Activated naive CD4-positive, alpha-beta T cell treated with anti-CD3 and anti-CD28 coated beads for 36 hours (primary cell): ENCODE measurements at regions of chr16 and their contacts with region 1.

Region 1: GRCh38 chr16:67017810-67018488 is 11.0 kb upstream of the CBFB start:
- DNase-seq: peak; percentile 96
- H3K4me3 Mint-ChIP-seq: no peak overlapping the region
- H3K27ac Mint-ChIP-seq: no peak overlapping the region
- H3K4me1 Mint-ChIP-seq: peaks cover 5% of the 10 kb centered on the region
- H3K27me3 Mint-ChIP-seq: peaks cover 4% of the 10 kb centered on the region

Region 2: GRCh38 chr16:66947302-66948065 is 70.5 kb before region 1 on chr16:
- CTCF ChIA-PET with region 1: interaction called, 13 read pairs
- intact Hi-C with region 1: loop called (anchors 1 kb)
- DNase-seq: peak; percentile 95
- H3K4me3 Mint-ChIP-seq: peak overlapping the region; percentile 81
- H3K27ac Mint-ChIP-seq: no peak overlapping the region
- H3K4me1 Mint-ChIP-seq: peaks cover 17% of the 10 kb centered on the region
- H3K27me3 Mint-ChIP-seq: peaks cover 34% of the 10 kb centered on the region

Region 3: DNA sequence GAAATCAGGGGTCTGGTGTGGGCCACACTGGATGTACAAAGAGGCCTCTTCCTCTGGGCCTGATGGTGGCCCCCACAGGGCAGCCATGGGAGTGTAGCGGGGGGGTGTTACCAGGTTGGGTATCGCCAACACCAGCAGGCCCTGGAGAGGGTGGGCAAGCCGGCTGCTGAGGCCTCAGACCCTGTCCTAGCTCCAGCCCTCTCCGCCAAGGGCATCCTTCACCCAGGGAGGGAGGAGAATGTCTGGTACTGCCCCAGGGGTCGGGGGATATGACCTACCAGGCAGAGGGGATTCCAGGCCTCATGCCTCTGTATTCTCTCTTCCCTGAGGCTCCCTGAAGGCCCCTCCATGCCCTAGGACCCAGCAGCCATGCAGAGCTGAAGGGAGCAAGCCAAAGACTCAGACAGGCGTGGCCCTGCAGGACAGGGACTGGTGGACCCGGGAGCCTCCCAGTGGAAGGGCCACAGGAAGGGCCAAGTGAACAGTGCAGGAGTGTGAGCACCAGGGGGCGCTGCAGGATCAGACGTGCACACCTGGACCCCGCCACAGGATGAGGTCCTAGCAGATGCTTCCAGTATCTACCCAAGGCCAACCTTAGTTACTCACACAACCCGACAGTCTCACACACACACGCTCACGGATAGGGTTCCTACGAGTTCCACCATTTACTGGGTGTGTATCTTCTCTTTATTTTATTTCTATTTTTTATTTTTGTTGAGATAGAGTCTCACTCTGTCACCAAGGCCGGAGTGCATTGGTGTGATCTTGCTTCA is 40.4 kb before region 1 on chr16:
- CTCF ChIA-PET with region 1: interaction called, 22 read pairs
- intact Hi-C with region 1: loop called (anchors 1 kb)
- DNase-seq: peak; percentile 94
- H3K4me3 Mint-ChIP-seq: no peak overlapping the region
- H3K27ac Mint-ChIP-seq: no peak overlapping the region
- H3K4me1 Mint-ChIP-seq: peaks cover 23% of the 10 kb centered on the region
- H3K27me3 Mint-ChIP-seq: no peaks in the 10 kb centered on the region

Region 4: DNA sequence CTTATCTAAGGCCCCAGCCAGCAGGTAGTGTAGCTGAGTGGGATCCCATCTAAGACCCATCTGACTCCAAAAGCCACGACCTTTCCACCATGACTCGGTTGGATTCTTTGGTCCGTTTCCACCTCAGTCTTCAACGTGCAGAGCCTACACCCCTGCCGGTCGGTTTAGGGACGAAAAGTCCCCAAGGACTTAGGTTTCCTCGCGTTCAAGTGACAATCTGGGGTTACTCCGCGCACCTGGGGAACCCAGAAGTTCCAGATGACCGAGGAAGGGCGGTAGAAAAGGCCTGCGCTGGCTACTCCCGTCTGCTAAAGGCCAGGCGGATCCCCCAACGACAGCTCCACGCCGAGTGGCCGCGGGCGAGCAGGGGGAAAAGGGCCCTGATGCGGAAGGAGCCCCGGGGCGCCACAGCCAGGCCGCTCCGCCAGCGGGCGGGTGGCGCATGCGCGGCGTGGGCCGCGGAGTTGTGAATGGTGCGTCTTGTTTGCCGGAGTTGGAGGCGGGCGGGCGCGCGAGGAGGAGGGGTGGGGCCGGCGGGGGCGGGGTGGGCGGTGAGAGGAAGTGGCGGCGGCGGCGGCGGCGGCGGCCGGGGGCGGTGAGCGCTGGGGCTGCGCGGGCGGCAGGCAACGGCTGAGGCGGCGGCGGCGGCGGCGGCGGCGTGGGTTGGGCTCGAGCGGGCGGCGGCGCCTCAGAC is 10.8 kb after region 1 on chr16 and contains the start of gene CBFB:
- CTCF ChIA-PET with region 1: interaction called, 39 read pairs
- intact Hi-C with region 1: no loop called
- DNase-seq: peak; percentile 93
- H3K4me3 Mint-ChIP-seq: peak within 1 kb of the TSS; percentile 86
- H3K27ac Mint-ChIP-seq: peak within 1 kb of the TSS; percentile 91
- H3K4me1 Mint-ChIP-seq: peaks cover 38% of the 10 kb centered on the region
- H3K27me3 Mint-ChIP-seq: no peaks in the 10 kb centered on the region
- total RNA-seq, gene CBFB: 79.6 to 86.8 TPM

Region 5: DNA sequence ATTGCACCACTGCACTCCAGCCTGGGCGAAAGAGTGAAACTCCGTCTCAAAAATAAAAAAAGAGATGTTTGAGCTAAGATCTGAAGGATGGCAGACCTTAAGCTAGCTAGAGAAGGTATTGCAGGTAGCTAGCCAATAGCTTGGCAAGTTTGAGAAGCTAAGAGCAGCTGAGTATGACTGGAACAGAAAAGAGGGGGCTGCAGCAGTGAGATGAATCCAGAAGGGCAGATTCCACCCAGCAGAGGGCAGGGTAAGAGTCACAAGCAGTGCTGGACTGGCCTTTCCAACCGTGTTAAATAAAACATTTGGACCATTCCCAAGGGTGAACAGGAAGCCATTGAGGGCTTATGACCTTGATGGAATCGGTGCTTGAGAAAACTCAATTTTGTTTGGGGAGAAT is 86.1 kb after region 1 on chr16:
- CTCF ChIA-PET with region 1: interaction called, 41 read pairs
- intact Hi-C with region 1: loop called (anchors 1 kb)
- DNase-seq: no peak
- H3K4me3 Mint-ChIP-seq: no peak overlapping the region
- H3K27ac Mint-ChIP-seq: peak overlapping the region; percentile 28
- H3K4me1 Mint-ChIP-seq: peaks cover 7% of the 10 kb centered on the region
- H3K27me3 Mint-ChIP-seq: no peaks in the 10 kb centered on the region

Region 6: DNA sequence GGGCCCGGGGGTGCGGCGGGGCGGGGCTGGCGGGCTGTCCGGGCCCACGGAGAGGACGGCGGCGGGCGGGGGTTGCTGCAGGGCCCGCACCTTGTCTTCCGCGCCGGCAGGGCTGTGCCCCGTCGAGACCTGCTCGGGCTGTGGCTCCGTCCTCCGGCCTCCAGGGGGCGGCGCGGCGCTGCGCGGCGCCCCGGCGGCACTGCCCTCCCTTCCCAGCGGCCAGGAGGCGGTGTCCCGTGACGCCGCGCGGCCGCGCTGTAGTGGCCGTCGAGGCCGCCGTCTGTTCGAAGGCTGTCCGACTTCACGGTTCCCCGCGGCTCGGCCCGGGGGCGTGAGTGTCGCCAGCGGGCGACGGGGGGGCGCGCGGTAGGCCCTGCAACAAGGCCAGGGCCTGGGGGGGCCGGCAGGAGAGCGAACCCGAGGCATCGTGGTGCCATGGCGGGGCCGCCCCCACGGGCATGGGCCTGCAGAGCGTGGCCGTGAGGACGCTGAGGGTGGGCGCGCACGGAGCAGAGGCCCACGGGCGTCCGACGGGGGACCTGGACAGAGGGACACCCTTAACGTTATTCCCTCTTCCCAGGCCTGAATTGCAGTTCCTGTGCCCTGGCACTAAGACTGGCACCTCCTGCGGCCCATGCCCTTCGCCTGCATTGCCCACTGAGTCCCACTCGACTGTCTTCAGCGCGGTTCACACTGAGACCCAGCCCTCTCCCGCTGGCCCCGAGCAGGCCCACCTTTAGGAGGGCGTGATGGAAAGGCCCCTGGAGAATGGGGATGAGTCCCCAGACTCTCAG is 261.5 kb after region 1 on chr16 and contains the start of gene PLEKHG4:
- CTCF ChIA-PET with region 1: no interaction called
- intact Hi-C with region 1: loop called (anchors 2 kb)
- DNase-seq: peak; percentile 85
- H3K4me3 Mint-ChIP-seq: peak within 1 kb of the TSS; percentile 79
- H3K27ac Mint-ChIP-seq: peak within 1 kb of the TSS; percentile 86
- H3K4me1 Mint-ChIP-seq: peaks cover 20% of the 10 kb centered on the region
- H3K27me3 Mint-ChIP-seq: no peaks in the 10 kb centered on the region
- total RNA-seq, gene PLEKHG4: 14.3 to 14.4 TPM

Region 7: GRCh38 chr16:67356396-67356795 is 338.4 kb after region 1 on chr16:
- CTCF ChIA-PET with region 1: no interaction called
- intact Hi-C with region 1: no loop called
- DNase-seq: no peak
- H3K4me3 Mint-ChIP-seq: no peak overlapping the region
- H3K27ac Mint-ChIP-seq: no peak overlapping the region
- H3K4me1 Mint-ChIP-seq: no peaks in the 10 kb centered on the region
- H3K27me3 Mint-ChIP-seq: peaks cover 3% of the 10 kb centered on the region